GM10248 (cell line): ENCODE measurements at regions of chr13 and their contacts with region 1.

Region 1: DNA sequence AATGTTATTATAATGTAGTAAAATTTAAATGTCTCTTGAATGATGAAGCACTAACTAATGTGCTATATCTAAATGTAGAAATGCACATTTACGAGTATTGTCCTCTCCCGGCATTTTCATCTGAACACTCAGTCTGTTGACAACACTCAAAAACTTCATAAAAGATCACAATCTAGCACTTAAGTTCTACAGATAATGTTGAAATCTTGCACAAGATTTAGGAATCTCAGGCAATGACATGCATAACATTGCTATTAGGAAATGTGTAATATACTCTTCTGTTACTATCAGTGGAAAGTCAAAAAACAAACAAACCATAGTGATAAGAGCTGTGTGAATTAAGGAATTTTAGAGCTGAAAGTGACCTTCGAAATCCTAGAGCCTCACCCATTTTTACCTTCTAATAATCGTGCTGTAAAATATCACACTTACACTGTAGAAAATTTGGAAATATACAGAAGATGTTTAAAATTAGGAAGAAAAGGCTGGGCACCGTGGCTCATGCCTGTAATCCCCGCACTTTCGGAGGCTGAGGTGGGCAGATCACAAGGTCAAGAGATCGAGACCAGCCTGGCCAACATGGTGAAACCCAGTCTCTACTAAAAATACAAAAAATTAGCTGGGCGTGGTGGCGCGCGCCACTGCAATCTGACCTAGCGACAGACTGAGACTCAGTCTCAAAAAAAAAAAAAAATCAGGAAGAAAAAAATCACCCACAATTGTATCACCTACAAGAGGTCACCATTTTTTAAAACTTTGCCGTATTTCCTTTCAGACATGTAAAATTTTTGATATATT is 37.7 kb upstream of the XPO4 start:
- DNase-seq: no peak
- CTCF ChIP-seq: no peak

Region 2: GRCh38 chr13:20924758-20925394 is 15.4 kb before region 1 on chr13:
- CTCF ChIA-PET with region 1: interaction called, 20 read pairs
- POLR2A ChIA-PET with region 1: no interaction called
- DNase-seq: peak; percentile 56
- CTCF ChIP-seq: peak; percentile 79

Region 3: DNA sequence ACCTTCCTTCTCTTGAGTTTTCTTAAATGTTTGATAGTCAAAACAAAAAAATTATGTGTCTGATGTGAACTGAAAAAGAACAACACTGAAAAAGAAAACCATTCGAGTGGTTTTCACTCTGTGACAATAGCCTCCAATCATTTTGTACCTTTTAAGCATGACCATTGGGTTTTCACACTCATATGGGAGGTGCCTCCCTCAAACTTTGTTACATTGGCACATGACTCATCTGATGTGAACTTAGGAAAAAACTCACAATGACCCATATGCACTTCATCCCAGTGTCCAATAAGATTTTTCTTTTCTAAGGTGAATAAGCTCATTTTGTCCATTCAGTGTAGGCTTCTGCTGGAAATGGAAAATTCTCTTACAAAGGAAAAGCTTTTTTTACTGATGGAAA is 28.9 kb after region 1 on chr13:
- CTCF ChIA-PET with region 1: interaction called, 14 read pairs
- POLR2A ChIA-PET with region 1: no interaction called
- DNase-seq: no peak
- CTCF ChIP-seq: no peak

Region 4: GRCh38 chr13:21176220-21176982 is 236.1 kb after region 1 on chr13 and contains the starts of genes MRPL57 and SKA3:
- CTCF ChIA-PET with region 1: interaction called, 66 read pairs
- POLR2A ChIA-PET with region 1: no interaction called
- DNase-seq: peak; percentile 98
- CTCF ChIP-seq: no peak

Region 5: GRCh38 chr13:22073718-22074117 is 1133.4 kb after region 1 on chr13:
- CTCF ChIA-PET with region 1: no interaction called
- POLR2A ChIA-PET with region 1: no interaction called
- DNase-seq: peak; percentile 32
- CTCF ChIP-seq: no peak